Cardiac septum (tissue), 1 donor: ENCODE measurements at regions of chr9 and their contacts with region 1.

Region 1: DNA sequence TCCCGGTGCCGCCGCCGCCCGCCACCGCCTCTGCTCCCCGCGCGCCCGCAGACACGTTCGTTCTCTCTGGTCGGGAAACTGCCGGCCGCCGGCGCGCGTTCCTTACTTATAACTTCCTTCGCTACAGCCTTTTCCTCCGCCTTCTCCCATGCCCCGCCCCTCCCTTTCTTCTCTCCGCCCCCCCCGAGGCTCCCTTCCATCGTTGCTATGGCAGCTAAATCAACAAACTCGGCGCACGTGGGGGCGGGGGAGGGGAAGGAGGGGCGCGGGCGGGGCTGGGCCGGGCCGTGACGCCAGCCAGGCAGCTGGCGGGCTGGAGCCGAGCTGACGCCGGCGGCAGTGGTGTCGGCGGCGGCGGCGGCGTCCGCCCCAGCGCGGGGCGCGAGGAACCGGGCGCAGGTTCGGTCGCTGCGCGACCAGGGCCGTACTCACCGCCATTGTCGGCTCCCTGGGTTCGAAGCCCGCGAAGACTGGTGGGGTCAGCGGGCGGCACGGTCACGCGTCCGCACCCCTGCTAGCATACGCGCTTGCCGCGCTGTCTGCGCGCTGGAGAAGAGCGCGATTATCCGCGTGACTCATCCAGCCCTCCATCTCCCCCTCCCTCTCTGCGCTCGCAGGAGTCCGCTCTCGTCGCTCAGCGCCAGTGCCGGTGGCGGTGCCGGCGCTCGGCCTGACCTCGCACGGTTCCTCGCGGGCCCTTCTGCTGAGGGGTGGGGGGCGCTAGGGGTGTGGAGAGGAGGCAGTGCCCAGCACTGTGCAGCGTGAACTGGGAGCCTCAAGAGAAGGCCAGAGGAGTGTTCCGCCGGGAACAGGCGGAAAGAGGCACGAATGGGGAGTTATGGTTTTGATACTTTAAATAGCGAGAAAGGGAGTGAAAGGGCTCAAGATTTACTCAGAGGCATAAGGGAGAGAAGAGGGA is at the start of gene KLF4:
- DNase-seq: peak; percentile 95
- total RNA-seq, gene KLF4: 19.8 TPM

Region 2: GRCh38 chr9:107600060-107600573 is 110.2 kb after region 1 on chr9:
- intact Hi-C with region 1: loop called (anchors 1 kb)
- DNase-seq: no peak

Region 3: GRCh38 chr9:107749787-107750444 is 260.0 kb after region 1 on chr9:
- intact Hi-C with region 1: loop called (anchors 1 kb)
- DNase-seq: peak; percentile 92

Region 4: DNA sequence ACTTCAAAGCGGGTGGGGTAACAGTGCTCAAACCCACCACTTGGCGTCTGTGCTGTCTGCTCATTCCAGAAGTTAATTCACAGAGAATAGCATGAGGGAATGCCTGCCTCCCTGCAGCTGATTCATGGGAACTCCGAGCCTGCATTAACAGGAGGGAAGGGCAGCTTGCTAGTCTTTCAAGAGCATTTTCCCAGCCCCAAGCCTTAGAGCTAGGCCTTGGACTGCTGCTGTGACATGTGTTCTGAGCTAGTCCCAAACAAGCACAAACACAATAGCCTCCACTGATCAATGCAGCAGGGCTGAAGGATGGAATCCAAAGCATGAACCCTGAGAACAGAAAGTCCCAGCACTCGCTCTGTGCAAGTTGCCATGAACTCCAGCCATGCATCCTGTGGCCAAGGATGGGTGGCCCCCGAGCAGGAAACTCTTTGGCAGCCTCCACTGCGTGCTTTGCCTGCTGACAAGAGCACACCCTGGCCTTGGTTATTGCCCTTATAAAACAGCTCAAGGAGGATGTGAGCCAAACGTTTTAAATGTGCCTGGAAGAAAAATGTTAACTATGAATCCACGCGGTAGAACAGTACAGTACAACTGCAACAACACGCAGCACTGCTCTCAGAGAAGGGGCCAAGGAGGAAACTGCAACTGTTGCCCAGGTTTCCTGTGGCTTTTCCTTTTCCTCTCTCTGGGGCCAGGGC is 652.7 kb after region 1 on chr9:
- intact Hi-C with region 1: loop called (anchors 2 kb)
- DNase-seq: peak; percentile 85

Region 5: GRCh38 chr9:108439911-108440315 is 950.0 kb after region 1 on chr9:
- intact Hi-C with region 1: loop called (anchors 10 kb)
- DNase-seq: no peak